ENCODE measurements at regions of chr1 and their contacts with region 1.

Region 1: DNA sequence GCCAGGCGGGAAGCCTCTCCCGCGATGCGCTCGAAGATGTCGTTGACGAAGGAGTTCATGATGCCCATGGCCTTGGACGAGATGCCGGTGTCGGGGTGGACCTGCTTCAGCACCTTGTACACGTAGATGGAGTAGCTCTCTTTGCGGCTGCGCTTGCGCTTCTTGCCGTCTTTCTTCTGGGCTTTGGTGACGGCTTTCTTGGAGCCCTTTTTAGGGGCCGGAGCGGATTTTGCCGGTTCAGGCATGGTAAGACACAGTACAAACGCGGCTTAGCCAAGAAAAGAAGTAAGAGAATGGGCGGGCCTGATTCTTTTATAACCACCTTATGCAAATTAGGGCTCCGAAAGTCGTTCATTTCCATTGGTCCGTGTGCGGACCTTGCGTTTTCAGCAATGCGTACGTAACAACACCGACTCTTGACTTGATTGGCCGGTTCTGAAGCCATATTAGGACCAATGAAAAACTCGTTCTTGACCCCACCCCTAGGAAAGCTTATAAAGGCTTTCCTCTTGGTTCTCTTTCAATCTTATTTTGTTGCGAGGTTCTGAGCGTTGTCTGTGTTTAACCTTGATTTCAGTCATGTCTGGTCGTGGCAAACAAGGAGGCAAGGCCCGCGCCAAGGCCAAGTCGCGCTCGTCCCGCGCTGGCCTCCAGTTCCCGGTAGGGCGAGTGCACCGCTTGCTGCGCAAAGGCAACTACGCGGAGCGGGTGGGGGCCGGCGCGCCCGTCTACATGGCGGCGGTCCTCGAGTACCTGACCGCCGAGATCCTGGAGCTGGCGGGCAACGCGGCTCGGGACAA is 12.8 kb upstream of the BOLA1 start:
- DNase-seq: peak; percentile 94
- ATAC-seq: peak; percentile 59
- H3K4me3 Mint-ChIP-seq: no peak overlapping the region
- H3K27ac Mint-ChIP-seq: no peak overlapping the region
- H3K4me1 Mint-ChIP-seq: peaks cover 19% of the 10 kb centered on the region
- H3K27me3 Mint-ChIP-seq: no peaks in the 10 kb centered on the region

Region 2: GRCh38 chr1:149899460-149900293 is 13.1 kb after region 1 on chr1 and contains the start of gene BOLA1:
- CTCF ChIA-PET with region 1: interaction called, 4 read pairs
- POLR2A ChIA-PET with region 1: interaction called, 105 read pairs
- DNase-seq: peak; percentile 90
- ATAC-seq: peak; percentile 97
- H3K4me3 Mint-ChIP-seq: peak within 1 kb of the TSS; percentile 85
- H3K27ac Mint-ChIP-seq: peak within 1 kb of the TSS; percentile 95
- H3K4me1 Mint-ChIP-seq: peaks cover 38% of the 10 kb centered on the region
- H3K27me3 Mint-ChIP-seq: no peaks in the 10 kb centered on the region
- total RNA-seq, gene BOLA1: 20.8 to 24.5 TPM

Region 3: DNA sequence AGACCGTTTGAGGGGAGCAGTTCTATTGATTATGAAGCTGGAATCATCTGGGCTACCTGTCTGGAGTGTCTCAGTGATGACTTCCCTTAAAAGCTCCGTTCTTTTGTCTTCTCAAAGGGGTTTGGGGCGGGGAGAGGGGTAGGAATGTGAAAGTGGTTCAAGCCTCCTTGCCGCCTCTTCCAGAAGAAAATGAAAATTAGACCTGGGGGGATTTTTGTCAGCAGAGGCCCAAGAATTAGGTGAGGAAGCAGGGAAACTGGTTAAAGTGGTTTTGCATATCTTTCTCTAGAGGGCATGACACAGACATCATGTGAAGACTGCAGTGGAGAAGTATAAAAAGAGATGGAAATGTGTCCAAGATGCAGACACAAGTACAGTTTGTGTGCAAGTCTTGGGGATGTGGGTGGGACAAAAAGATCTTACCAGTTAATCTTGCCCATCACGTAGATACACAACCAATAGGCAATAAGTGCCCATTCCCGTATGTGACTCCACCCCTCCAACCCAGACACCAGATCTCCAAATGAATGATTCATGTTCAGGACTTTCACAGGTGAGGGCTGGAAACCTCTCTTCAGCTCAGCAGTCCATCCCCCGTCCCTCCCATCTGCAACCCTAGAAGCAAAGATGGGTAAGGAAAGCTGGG is 50.6 kb after region 1 on chr1:
- CTCF ChIA-PET with region 1: interaction called, 3 read pairs
- POLR2A ChIA-PET with region 1: interaction called, 157 read pairs
- DNase-seq: no peak
- ATAC-seq: no peak
- H3K4me3 Mint-ChIP-seq: no peak overlapping the region
- H3K27ac Mint-ChIP-seq: peak overlapping the region; percentile 65
- H3K4me1 Mint-ChIP-seq: peaks cover 38% of the 10 kb centered on the region
- H3K27me3 Mint-ChIP-seq: no peaks in the 10 kb centered on the region

Region 4: GRCh38 chr1:150010393-150011115 is 124.0 kb after region 1 on chr1 and contains the start of gene OTUD7B:
- CTCF ChIA-PET with region 1: interaction called, 14 read pairs
- POLR2A ChIA-PET with region 1: interaction called, 31 read pairs
- DNase-seq: peak; percentile 81
- ATAC-seq: peak; percentile 84
- H3K4me3 Mint-ChIP-seq: peak within 1 kb of the TSS; percentile 97
- H3K27ac Mint-ChIP-seq: peak within 1 kb of the TSS; percentile 94
- H3K4me1 Mint-ChIP-seq: peaks cover 35% of the 10 kb centered on the region
- H3K27me3 Mint-ChIP-seq: no peaks in the 10 kb centered on the region
- total RNA-seq, gene OTUD7B: 10.3 to 12.1 TPM

Region 5: DNA sequence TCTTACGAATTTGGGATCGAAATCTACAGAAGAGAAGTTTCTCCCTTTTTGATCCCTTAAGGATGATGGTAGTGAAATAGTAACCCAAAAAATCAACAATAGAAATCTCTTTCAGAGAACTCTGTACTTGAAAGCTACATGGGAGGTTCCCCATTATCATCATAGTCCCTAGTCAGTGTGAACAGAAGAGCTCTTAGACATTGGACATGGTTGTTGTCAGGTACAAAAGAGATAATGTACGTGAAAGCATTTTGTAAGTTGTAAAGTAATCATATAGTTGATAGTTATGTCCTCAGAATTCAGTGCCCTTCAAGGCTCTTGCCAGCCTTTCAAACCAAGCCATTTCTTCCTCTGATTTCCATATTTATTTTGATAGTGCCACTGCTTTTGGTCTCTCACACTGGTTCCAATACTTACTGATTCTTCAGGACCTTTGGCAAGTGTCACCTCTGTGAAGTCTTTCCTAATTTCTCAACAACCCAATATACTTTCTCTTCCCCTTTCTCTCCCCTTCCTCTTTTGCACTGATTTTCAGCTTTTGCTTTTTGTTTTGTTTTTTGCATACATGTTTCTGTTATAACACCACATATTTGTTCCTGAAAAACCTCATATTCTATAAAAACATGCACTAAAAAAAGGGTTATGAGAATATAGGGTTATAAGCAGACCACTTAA is 203.4 kb after region 1 on chr1:
- CTCF ChIA-PET with region 1: no interaction called
- POLR2A ChIA-PET with region 1: interaction called, 13 read pairs
- DNase-seq: no peak
- ATAC-seq: no peak
- H3K4me3 Mint-ChIP-seq: no peak overlapping the region
- H3K27ac Mint-ChIP-seq: peak overlapping the region; percentile 43
- H3K4me1 Mint-ChIP-seq: peaks cover 51% of the 10 kb centered on the region
- H3K27me3 Mint-ChIP-seq: no peaks in the 10 kb centered on the region

Region 6: DNA sequence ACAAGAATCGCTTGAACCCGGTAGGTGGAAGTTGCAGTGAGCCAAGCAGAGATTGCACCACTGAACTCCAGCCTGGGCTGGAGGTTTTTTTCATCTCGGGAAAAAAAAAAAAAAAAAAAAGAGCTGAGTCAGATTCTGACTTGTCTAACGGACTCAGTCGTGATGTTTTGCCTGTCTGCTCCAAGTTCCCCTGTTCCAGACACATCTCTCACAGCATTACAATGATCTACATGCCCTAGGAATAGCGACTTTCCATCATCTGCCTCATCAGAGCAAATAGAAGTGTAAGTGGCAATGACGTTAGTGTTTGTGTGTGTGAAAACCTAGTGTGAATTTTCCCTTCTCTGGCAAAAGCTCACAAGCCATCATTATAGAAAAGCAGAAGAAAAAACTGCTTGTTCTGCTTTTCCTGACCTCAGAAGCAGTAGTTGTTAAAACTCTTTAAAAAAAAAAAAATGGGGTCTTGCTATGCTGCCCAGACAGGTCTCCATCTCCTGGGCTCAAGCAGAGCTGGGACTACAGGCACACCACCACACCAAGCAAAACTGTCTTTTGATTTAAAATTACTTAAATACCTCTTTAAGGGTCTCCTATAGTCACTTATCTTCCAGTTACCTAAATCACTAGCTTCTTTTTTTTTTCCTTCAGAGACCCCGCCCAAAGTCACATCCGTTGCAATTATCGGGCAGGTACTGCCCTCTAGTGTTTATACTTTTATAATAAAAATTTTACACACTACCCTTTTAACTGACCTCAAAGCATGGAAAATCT is 300.4 kb after region 1 on chr1:
- CTCF ChIA-PET with region 1: interaction called, 34 read pairs
- POLR2A ChIA-PET with region 1: interaction called, 35 read pairs
- DNase-seq: peak; percentile 44
- ATAC-seq: peak; percentile 79
- H3K4me3 Mint-ChIP-seq: peak overlapping the region; percentile 1
- H3K27ac Mint-ChIP-seq: peak overlapping the region; percentile 68
- H3K4me1 Mint-ChIP-seq: peaks cover 15% of the 10 kb centered on the region
- H3K27me3 Mint-ChIP-seq: no peaks in the 10 kb centered on the region

Region 7: DNA sequence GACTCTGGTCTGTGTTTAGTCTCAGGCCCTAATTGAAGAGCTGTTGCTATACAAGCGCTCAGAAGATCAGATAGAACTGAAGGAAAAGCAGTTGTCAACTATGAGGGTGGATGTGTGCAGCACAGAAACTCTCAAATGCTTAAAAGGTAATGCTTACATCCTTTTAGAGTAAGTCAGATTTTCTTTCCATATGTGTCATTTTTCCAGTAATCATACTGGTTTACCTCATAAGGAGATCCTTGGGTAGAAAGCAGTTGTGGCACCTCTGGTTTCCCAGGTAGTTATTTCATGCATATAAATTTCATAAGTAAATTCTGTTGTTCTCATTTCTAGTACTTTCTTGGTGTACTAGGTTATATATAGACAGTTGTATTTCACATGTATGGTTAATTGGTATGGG is 557.6 kb after region 1 on chr1:
- CTCF ChIA-PET with region 1: no interaction called
- POLR2A ChIA-PET with region 1: no interaction called
- DNase-seq: no peak
- ATAC-seq: no peak
- H3K4me3 Mint-ChIP-seq: no peak overlapping the region
- H3K27ac Mint-ChIP-seq: no peak overlapping the region
- H3K4me1 Mint-ChIP-seq: peaks cover 3% of the 10 kb centered on the region
- H3K27me3 Mint-ChIP-seq: no peaks in the 10 kb centered on the region